Transverse colon (tissue), 4 donors: ENCODE measurements at regions of chr1 and their contacts with region 1.

Region 1: DNA sequence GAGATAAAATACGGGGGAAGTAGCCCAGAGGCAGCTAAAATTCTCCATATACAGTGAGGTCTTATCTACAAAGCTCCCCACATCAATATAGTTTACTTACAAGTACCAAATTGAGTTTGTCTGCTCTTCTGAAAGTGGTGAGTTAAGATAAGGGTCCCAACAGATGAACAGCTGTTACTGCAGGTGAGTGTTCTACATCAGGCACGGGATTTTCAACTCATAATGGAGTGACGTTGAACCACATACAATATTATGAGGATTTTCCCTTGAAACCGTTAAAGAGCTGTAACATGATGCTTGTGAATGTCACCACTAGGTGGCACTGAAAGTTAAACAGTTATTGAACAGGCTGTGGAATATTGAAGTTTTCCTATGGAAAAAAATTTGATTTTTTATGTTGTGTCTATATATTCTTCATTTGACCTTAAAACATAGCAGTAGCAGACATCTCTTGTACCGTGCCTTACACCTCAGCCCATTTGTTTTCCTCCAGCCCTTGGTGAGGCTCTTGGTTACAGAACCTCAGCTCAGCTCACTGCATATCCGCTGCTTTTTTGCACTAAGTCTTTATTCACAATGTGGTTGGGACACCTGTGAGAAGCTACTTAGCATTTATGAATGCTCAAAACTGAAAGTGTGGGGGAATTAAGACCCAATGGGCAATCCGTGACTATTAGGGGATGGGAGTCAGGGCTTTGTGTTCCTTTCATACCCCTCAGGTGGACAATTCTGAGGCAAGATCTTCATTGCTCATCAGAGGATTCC is 23.2 kb downstream of the CD1D start:
- DNase-seq: no peak
- H3K4me3 ChIP-seq: no peak overlapping the region
- H3K27ac ChIP-seq: no peak overlapping the region
- H3K4me1 ChIP-seq: no peaks in the 10 kb centered on the region
- H3K27me3 ChIP-seq: peaks cover 9% of the 10 kb centered on the region
- CTCF ChIP-seq: peak; percentile 62 to 85 (median 76)
- EP300 ChIP-seq: no peak
- POLR2A ChIP-seq: no peak

Region 2: GRCh38 chr1:157269656-157270375 is 934.1 kb before region 1 on chr1:
- in situ Hi-C with region 1: no loop called
- intact Hi-C with region 1: no loop called
- DNase-seq: no peak
- H3K4me3 ChIP-seq: no peak overlapping the region
- H3K27ac ChIP-seq: no peak overlapping the region
- H3K4me1 ChIP-seq: no peaks in the 10 kb centered on the region
- H3K27me3 ChIP-seq: no peaks in the 10 kb centered on the region
- CTCF ChIP-seq: no peak
- EP300 ChIP-seq: no peak
- POLR2A ChIP-seq: no peak

Region 3: GRCh38 chr1:158998781-158999161 is 794.9 kb after region 1 on chr1:
- in situ Hi-C with region 1: loop called in 2 of 4 experiments (anchors 10 to 25 kb)
- intact Hi-C with region 1: no loop called
- DNase-seq: peak; percentile 26
- H3K4me3 ChIP-seq: peak overlapping the region in 3 of 4 donors; percentile 26 to 44 (median 27)
- H3K27ac ChIP-seq: peak overlapping the region; percentile 72 to 86 (median 81)
- H3K4me1 ChIP-seq: peaks cover 0 to 31% (median 2%) of the 10 kb centered on the region in 4 donors
- H3K27me3 ChIP-seq: no peaks in the 10 kb centered on the region
- CTCF ChIP-seq: peak; percentile 84 to 93 (median 89)
- EP300 ChIP-seq: no peak
- POLR2A ChIP-seq: no peak

Region 4: DNA sequence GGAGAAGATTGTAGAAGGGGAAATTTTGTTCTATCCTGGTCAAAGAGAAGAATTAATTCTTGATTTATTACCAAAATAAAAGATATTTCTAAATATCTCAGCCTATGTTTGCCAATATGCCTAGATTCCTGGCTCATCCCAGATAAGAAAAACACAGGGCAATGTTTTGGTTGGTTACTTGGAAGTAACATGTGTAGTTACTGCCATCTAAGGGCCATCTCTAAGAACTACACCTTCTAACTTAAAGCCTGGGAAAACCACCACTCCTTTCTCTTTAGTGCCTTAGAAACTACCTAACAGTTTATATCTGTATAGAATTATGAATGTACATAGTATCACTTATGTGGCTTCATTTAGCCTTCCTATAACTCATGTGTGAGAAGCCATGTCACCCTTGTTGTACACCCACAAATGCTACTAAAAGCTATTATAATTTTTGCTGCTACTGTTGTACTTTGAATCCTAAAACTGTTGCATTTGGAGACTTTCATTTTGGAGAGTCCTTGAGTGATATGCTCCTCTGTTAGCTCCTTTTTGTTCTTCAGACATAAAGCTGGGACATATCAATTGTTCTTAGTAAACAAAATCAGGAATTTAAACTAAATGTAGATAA is 868.2 kb after region 1 on chr1:
- in situ Hi-C with region 1: loop called in 2 of 4 experiments (anchors 25 kb)
- intact Hi-C with region 1: loop called (anchors 5 kb)
- DNase-seq: no peak
- H3K4me3 ChIP-seq: no peak overlapping the region
- H3K27ac ChIP-seq: no peak overlapping the region
- H3K4me1 ChIP-seq: no peaks in the 10 kb centered on the region
- H3K27me3 ChIP-seq: no peaks in the 10 kb centered on the region
- CTCF ChIP-seq: peak; percentile 50 to 75 (median 67)
- EP300 ChIP-seq: no peak
- POLR2A ChIP-seq: no peak

Region 5: GRCh38 chr1:159077120-159077961 is 873.5 kb after region 1 on chr1:
- in situ Hi-C with region 1: loop called in 2 of 4 experiments (anchors 25 kb)
- intact Hi-C with region 1: loop called (anchors 5 kb)
- DNase-seq: peak; percentile 77
- H3K4me3 ChIP-seq: no peak overlapping the region
- H3K27ac ChIP-seq: peak overlapping the region; percentile 57 to 76 (median 66)
- H3K4me1 ChIP-seq: no peaks in the 10 kb centered on the region
- H3K27me3 ChIP-seq: no peaks in the 10 kb centered on the region
- CTCF ChIP-seq: no peak
- EP300 ChIP-seq: no peak
- POLR2A ChIP-seq: no peak